ENCODE measurements at regions of chr20 and their contacts with region 1.

Region 1: DNA sequence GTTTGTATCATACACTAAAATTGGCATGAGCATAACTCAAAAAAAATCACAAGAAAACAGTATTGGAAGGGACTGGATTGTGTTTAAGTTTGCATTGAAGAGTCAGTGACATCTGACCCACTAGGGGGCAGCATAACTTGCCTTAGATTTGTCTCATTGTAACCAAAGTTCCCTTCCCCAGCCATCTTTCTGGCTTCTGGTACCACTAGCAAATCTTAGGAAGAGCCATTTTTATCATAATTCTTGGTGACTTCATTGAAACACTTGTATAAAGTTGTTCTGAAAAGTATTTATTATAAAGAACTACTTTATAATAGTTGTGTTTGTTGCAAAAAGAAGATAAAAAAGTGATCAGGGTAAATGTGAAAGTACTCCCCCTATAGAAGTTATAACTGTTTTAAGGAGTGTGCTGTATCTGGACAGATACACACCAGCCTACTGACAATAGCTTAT is 7.7 kb downstream of the CSTF1 start:
- DNase-seq: peak; percentile 31
- ATAC-seq: peak; percentile 94
- H3K4me3 ChIP-seq: no peak overlapping the region
- H3K27ac ChIP-seq: no peak overlapping the region
- H3K4me1 ChIP-seq: no peaks in the 10 kb centered on the region
- H3K27me3 ChIP-seq: no peaks in the 10 kb centered on the region
- CTCF ChIP-seq: peak; percentile 75 to 81 (median 78)
- EP300 ChIP-seq: no peak
- POLR2A ChIP-seq: no peak
- RAD21 ChIP-seq: peak; percentile 78

Region 2: DNA sequence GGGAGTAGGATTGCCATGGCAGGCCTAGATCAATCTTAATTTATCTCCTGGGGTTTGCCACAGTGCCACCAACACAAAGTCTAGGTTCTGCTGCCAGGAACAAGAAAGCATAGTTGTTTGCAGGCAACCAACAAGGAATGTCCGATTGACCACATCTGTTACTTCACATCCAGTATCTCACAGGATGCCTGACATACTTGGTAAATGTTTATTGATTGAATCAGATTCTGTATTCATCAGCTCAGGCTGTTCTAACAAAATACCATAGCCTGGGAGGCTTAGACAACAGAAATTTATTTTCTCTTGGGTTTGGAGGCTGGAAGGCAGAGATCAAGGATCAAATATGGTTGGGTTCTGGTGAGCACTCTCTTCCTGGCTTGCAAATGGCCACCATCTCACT is 177.9 kb before region 1 on chr20:
- CTCF ChIA-PET with region 1: no interaction called
- POLR2A ChIA-PET with region 1: no interaction called
- RAD21 ChIA-PET with region 1: no interaction called
- SMC1A ChIA-PET with region 1: no interaction called
- in situ Hi-C with region 1: no loop called
- intact Hi-C with region 1: no loop called
- DNase-seq: no peak
- ATAC-seq: no peak
- H3K4me3 ChIP-seq: no peak overlapping the region
- H3K27ac ChIP-seq: no peak overlapping the region
- H3K4me1 ChIP-seq: no peaks in the 10 kb centered on the region
- H3K27me3 ChIP-seq: no peaks in the 10 kb centered on the region
- CTCF ChIP-seq: no peak
- EP300 ChIP-seq: no peak
- POLR2A ChIP-seq: no peak
- RAD21 ChIP-seq: no peak

Region 3: GRCh38 chr20:56440346-56441007 is 40.4 kb after region 1 on chr20:
- CTCF ChIA-PET with region 1: no interaction called
- POLR2A ChIA-PET with region 1: no interaction called
- RAD21 ChIA-PET with region 1: no interaction called
- SMC1A ChIA-PET with region 1: no interaction called
- in situ Hi-C with region 1: no loop called
- intact Hi-C with region 1: no loop called
- DNase-seq: peak; percentile 58
- ATAC-seq: peak; percentile 88
- H3K4me3 ChIP-seq: no peak overlapping the region
- H3K27ac ChIP-seq: no peak overlapping the region
- H3K4me1 ChIP-seq: peaks cover 20% of the 10 kb centered on the region
- H3K27me3 ChIP-seq: no peaks in the 10 kb centered on the region
- CTCF ChIP-seq: no peak
- EP300 ChIP-seq: peak; percentile 48 to 52; a peak in 2 of 4 replicates
- POLR2A ChIP-seq: no peak
- RAD21 ChIP-seq: no peak

Region 4: DNA sequence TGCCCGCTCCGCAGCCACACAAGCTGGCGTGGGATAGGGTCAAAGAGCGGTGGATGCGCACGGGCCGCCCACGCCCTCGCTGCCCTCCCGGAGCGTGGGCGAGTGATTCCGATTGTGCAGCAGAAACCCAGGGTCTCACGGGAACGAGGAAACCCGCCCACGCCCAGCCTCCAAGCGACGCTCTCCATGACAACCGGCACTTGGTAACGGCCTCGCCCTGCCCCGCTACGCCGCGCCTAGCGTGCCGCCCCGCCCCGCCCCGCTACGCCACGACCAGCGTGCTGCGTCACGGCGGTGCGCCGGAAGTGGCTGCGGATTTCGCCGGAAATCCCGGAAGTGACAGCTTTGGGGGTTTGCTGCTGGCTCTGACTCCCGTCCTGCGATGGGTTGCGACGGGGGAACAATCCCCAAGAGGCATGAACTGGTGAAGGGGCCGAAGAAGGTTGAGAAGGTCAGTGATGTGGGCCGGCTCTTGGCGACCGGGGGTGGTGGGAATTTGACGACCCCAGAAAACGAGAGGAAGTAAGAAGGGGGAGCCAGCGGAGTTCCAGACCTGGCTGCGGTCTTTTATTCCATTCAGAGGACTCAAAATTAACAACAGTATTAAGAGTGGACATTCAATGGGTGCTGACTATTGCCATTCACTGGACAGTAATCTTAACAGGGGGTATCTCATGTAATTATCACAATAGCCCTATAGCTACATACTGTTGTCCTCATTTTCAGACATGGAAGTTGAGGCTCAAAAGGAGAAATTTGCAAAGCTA is 68.4 kb after region 1 on chr20 and contains the start of gene RTF2:
- CTCF ChIA-PET with region 1: interaction called, 13 read pairs
- POLR2A ChIA-PET with region 1: no interaction called
- RAD21 ChIA-PET with region 1: no interaction called
- SMC1A ChIA-PET with region 1: interaction called, 14 read pairs
- in situ Hi-C with region 1: no loop called
- intact Hi-C with region 1: loop called (anchors 1 kb)
- DNase-seq: peak; percentile 86
- ATAC-seq: peak; percentile 98
- H3K4me3 ChIP-seq: peak within 1 kb of the TSS; percentile 90
- H3K27ac ChIP-seq: peak within 1 kb of the TSS; percentile 85
- H3K4me1 ChIP-seq: peaks cover 14% of the 10 kb centered on the region
- H3K27me3 ChIP-seq: no peaks in the 10 kb centered on the region
- CTCF ChIP-seq: no peak
- EP300 ChIP-seq: peak; percentile 12 to 65; a peak in 1 of 4 replicates
- POLR2A ChIP-seq: peak; percentile 93
- RAD21 ChIP-seq: no peak
- polyA plus RNA-seq, gene RTF2: 99.3 to 133 TPM

Region 5: GRCh38 chr20:56516631-56517030 is 116.5 kb after region 1 on chr20:
- CTCF ChIA-PET with region 1: interaction called, 12 read pairs
- POLR2A ChIA-PET with region 1: no interaction called
- RAD21 ChIA-PET with region 1: no interaction called
- SMC1A ChIA-PET with region 1: interaction called, 5 read pairs
- in situ Hi-C with region 1: no loop called
- intact Hi-C with region 1: loop called (anchors 1 kb)
- DNase-seq: no peak
- ATAC-seq: no peak
- H3K4me3 ChIP-seq: no peak overlapping the region
- H3K27ac ChIP-seq: no peak overlapping the region
- H3K4me1 ChIP-seq: no peaks in the 10 kb centered on the region
- H3K27me3 ChIP-seq: no peaks in the 10 kb centered on the region
- CTCF ChIP-seq: no peak
- EP300 ChIP-seq: no peak
- POLR2A ChIP-seq: no peak
- RAD21 ChIP-seq: no peak

Region 6: GRCh38 chr20:56574531-56575142 is 174.5 kb after region 1 on chr20:
- CTCF ChIA-PET with region 1: no interaction called
- POLR2A ChIA-PET with region 1: no interaction called
- RAD21 ChIA-PET with region 1: no interaction called
- SMC1A ChIA-PET with region 1: interaction called, 3 read pairs
- in situ Hi-C with region 1: no loop called
- intact Hi-C with region 1: loop called (anchors 2 kb)
- DNase-seq: no peak
- ATAC-seq: no peak
- H3K4me3 ChIP-seq: no peak overlapping the region
- H3K27ac ChIP-seq: no peak overlapping the region
- H3K4me1 ChIP-seq: no peaks in the 10 kb centered on the region
- H3K27me3 ChIP-seq: no peaks in the 10 kb centered on the region; a peak in 2 of 4 replicates
- CTCF ChIP-seq: no peak
- EP300 ChIP-seq: no peak
- POLR2A ChIP-seq: no peak
- RAD21 ChIP-seq: no peak

Measured in GM12878 (cell line).